ENCODE measurements at regions of chr7 and their contacts with region 1.

Region 1: GRCh38 chr7:77536413-77537135 is 521 bp upstream of the PTPN12 start:
- DNase-seq: peak; percentile 94 to 97 (median 95)
- H3K4me3 ChIP-seq: peak overlapping the region; percentile 77 to 98 (median 90)
- H3K4me3 Mint-ChIP-seq: peak overlapping the region; percentile 93 to 95
- H3K27ac ChIP-seq: peak overlapping the region; percentile 82 to 93
- H3K27ac Mint-ChIP-seq: peak overlapping the region; percentile 96 to 98 (median 96)
- H3K4me1 ChIP-seq: peaks cover 32 to 38% of the 10 kb centered on the region in 2 donors
- H3K4me1 Mint-ChIP-seq: peaks cover 39% of the 10 kb centered on the region
- H3K27me3 ChIP-seq: no peaks in the 10 kb centered on the region
- H3K27me3 Mint-ChIP-seq: no peaks in the 10 kb centered on the region
- CTCF ChIP-seq: no peak

Region 2: GRCh38 chr7:77415823-77416622 is 120.6 kb before region 1 on chr7 and contains the start of gene GSAP:
- intact Hi-C with region 1: loop called in 1 of 2 experiments (anchors 10 kb)
- DNase-seq: peak in 1 of 3 donors; percentile 72
- H3K4me3 ChIP-seq: peak within 1 kb of the TSS; percentile 60 to 86 (median 75)
- H3K4me3 Mint-ChIP-seq: peak within 1 kb of the TSS; percentile 77 to 89
- H3K27ac ChIP-seq: peak within 1 kb of the TSS; percentile 75 to 99
- H3K27ac Mint-ChIP-seq: peak within 1 kb of the TSS; percentile 87 to 99 (median 93)
- H3K4me1 ChIP-seq: peaks cover 52 to 67% of the 10 kb centered on the region in 2 donors
- H3K4me1 Mint-ChIP-seq: peaks cover 57% of the 10 kb centered on the region
- H3K27me3 ChIP-seq: no peaks in the 10 kb centered on the region
- H3K27me3 Mint-ChIP-seq: no peaks in the 10 kb centered on the region
- CTCF ChIP-seq: no peak
- polyA plus RNA-seq, gene GSAP: 19.1 to 105 (median 35.6) TPM

Region 3: DNA sequence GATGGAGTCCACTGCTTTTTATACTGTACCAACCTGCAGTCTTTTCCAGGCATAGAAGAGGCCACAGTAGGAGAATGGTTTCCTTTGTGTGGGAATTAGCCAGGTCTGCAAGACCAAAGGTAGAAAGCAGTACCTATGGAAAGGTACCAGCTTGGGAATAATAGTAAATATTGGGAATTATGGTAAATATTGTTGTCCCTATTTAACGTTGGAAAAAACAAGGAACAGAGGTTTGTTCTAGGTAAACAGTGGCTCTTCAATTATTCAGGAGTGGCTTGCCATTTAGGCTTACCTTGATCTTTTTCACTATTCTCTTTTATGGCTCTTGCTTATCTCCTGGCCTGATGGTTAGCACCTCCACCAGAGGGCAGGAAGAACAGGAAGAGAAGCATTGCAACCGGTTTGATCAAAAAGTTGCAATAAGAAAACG is 76.5 kb before region 1 on chr7:
- intact Hi-C with region 1: loop called (anchors 5 to 10 kb)
- DNase-seq: no peak
- H3K4me3 ChIP-seq: no peak overlapping the region
- H3K4me3 Mint-ChIP-seq: no peak overlapping the region
- H3K27ac ChIP-seq: no peak overlapping the region
- H3K27ac Mint-ChIP-seq: no peak overlapping the region
- H3K4me1 ChIP-seq: peaks cover 53 to 74% of the 10 kb centered on the region in 2 donors
- H3K4me1 Mint-ChIP-seq: peaks cover 63% of the 10 kb centered on the region
- H3K27me3 ChIP-seq: no peaks in the 10 kb centered on the region
- H3K27me3 Mint-ChIP-seq: peaks cover 0 to 4% (median 0%) of the 10 kb centered on the region in 3 donors
- CTCF ChIP-seq: no peak

Region 4: DNA sequence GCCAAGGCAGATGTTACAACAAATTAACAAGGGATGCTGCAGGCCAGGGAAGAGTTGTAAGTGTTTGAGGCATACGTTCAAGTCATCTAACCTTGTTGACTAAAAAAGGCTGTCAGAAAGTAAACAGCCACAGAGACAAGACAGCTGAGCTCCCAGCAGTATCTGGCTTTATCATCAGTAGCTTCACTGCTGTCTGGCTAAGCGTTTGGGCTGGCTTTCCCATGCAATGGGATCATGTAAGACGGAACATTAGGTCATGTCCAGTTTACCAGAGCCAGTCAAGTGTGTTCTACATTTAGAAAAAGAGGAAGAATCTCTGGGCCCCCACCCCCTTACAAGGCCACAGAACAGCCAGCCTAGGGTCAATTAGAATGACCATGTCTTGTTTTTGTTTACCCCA is 69.2 kb before region 1 on chr7:
- intact Hi-C with region 1: loop called (anchors 5 to 10 kb)
- DNase-seq: peak; percentile 74 to 86 (median 76)
- H3K4me3 ChIP-seq: peak overlapping the region in 1 of 3 experiments; percentile 3
- H3K4me3 Mint-ChIP-seq: peak overlapping the region in 1 of 2 donors; percentile 21
- H3K27ac ChIP-seq: peak overlapping the region in 1 of 2 donors; percentile 60
- H3K27ac Mint-ChIP-seq: peak overlapping the region; percentile 83 to 92 (median 87)
- H3K4me1 ChIP-seq: peaks cover 38 to 52% of the 10 kb centered on the region in 2 donors
- H3K4me1 Mint-ChIP-seq: peaks cover 39% of the 10 kb centered on the region
- H3K27me3 ChIP-seq: no peaks in the 10 kb centered on the region
- H3K27me3 Mint-ChIP-seq: peaks cover 0 to 5% (median 1%) of the 10 kb centered on the region in 3 donors
- CTCF ChIP-seq: no peak

Region 5: DNA sequence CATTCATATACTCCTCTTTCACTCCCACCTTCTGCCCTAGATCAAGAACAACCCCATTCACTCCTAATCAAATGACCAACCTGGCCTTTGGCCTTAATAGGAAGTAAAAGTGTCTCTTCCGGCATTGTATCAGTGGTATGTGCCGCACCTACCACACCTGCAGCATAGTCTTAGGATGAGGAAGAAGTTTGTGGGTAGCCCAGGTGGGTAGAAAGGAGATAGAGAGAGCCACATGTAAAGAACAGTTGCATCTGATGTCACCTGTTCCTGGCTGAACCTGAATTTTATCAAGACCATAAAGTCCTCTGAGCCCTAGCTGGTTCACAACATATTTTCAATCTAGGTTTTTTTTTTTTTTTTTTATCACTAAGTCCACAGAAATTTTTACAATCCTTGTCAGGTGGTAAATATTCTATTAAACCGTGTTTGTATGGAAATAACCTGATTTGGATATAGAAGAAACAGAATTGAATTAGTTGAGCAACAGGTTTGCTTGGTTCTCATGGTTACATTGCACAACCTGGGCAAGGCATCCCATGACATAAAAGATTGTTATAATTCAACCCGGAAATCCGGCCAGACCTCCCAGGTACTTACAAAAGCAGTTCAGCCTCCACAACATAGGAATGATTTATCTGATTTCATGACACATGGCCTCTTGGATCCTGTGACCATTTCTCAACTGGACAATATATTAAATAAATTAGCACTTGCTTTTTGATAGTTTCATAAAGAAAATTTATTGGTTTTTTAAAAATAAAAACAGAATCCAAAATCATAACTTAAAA is 54.8 kb before region 1 on chr7:
- intact Hi-C with region 1: no loop called
- DNase-seq: peak; percentile 63 to 93 (median 88)
- H3K4me3 ChIP-seq: no peak overlapping the region
- H3K4me3 Mint-ChIP-seq: no peak overlapping the region
- H3K27ac ChIP-seq: peak overlapping the region in 1 of 2 donors; percentile 68
- H3K27ac Mint-ChIP-seq: peak overlapping the region; percentile 71 to 95 (median 90)
- H3K4me1 ChIP-seq: peaks cover 31 to 32% of the 10 kb centered on the region in 2 donors
- H3K4me1 Mint-ChIP-seq: peaks cover 21% of the 10 kb centered on the region
- H3K27me3 ChIP-seq: no peaks in the 10 kb centered on the region
- H3K27me3 Mint-ChIP-seq: no peaks in the 10 kb centered on the region
- CTCF ChIP-seq: no peak

Region 6: DNA sequence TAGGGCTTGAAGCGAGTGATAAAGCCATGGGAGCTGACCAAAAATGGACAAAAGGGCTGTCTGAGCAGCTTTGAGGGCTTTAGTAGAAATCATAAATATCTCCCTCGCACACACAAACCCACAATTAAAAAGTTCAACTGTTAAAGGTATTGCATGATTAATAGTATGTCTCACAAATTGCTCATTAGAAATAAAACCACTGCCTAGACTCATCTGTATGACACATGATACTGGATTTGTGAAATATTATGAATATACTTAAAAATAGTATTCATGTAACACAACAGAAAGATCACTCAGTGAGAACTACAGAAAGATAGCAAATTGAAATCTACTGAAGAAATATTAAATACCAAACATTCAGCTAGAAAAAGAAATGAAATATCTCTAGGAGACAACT is 11.3 kb before region 1 on chr7:
- intact Hi-C with region 1: loop called in 1 of 2 experiments (anchors 2 kb)
- DNase-seq: peak in 2 of 3 donors; percentile 28 to 36
- H3K4me3 ChIP-seq: no peak overlapping the region
- H3K4me3 Mint-ChIP-seq: no peak overlapping the region
- H3K27ac ChIP-seq: peak overlapping the region in 1 of 2 donors; percentile 29
- H3K27ac Mint-ChIP-seq: peak overlapping the region in 2 of 7 donors; percentile 48 to 70
- H3K4me1 ChIP-seq: peaks cover 28 to 46% of the 10 kb centered on the region in 2 donors
- H3K4me1 Mint-ChIP-seq: peaks cover 30% of the 10 kb centered on the region
- H3K27me3 ChIP-seq: no peaks in the 10 kb centered on the region
- H3K27me3 Mint-ChIP-seq: peaks cover 0 to 2% (median 0%) of the 10 kb centered on the region in 3 donors
- CTCF ChIP-seq: no peak

Region 7: DNA sequence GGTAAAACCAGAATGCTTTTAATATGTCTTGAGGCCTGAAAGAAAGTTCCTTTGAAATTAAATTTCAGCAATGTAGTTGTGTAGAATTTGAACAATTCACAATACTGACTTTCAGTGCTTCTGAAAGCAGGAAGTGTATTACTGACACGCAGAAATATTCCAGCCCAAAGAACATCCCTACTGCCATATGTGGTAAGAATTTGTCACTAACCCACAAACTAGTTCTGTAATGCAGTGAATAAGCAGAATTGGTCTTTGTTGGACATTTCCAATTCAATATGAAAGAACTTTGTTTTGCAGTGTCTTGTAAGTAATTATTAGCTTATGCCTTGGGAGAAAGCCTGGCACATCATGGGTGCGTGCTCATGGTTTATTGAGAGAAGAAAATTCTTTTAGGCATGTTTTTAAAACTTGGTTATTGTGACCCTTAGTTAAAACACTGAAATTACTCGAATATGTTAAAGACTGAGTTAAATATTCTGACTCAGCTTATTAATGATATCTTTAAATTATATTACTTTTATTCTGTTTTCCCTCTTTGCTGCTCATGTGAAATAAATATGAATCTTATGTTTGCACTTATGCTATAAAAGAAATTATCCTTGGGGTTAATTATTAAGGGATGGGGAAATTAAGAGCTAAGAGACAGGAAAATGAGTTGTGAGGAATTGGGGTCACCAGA is 33.9 kb after region 1 on chr7:
- intact Hi-C with region 1: loop called in 1 of 2 experiments (anchors 2 kb)
- DNase-seq: peak; percentile 81 to 95 (median 94)
- H3K4me3 ChIP-seq: peak overlapping the region in 1 of 3 experiments; percentile 29
- H3K4me3 Mint-ChIP-seq: no peak overlapping the region
- H3K27ac ChIP-seq: peak overlapping the region; percentile 87 to 92
- H3K27ac Mint-ChIP-seq: peak overlapping the region; percentile 89 to 96 (median 93)
- H3K4me1 ChIP-seq: peaks cover 37 to 58% of the 10 kb centered on the region in 2 donors
- H3K4me1 Mint-ChIP-seq: peaks cover 43% of the 10 kb centered on the region
- H3K27me3 ChIP-seq: no peaks in the 10 kb centered on the region
- H3K27me3 Mint-ChIP-seq: no peaks in the 10 kb centered on the region
- CTCF ChIP-seq: no peak

Region 8: GRCh38 chr7:77619314-77619713 is 82.7 kb after region 1 on chr7:
- intact Hi-C with region 1: no loop called
- DNase-seq: no peak
- H3K4me3 ChIP-seq: no peak overlapping the region
- H3K4me3 Mint-ChIP-seq: no peak overlapping the region
- H3K27ac ChIP-seq: no peak overlapping the region
- H3K27ac Mint-ChIP-seq: no peak overlapping the region
- H3K4me1 ChIP-seq: no peaks in the 10 kb centered on the region
- H3K4me1 Mint-ChIP-seq: no peaks in the 10 kb centered on the region
- H3K27me3 ChIP-seq: no peaks in the 10 kb centered on the region
- H3K27me3 Mint-ChIP-seq: no peaks in the 10 kb centered on the region
- CTCF ChIP-seq: no peak

Measured in CD14-positive monocyte (primary cell).